ENCODE measurements at regions of chr2 and their contacts with region 1.

Region 1: GRCh38 chr2:37877457-37878315 is 47.4 kb upstream of the RMDN2 start:
- DNase-seq: peak; percentile 78
- H3K4me3 Mint-ChIP-seq: no peak overlapping the region
- H3K27ac Mint-ChIP-seq: no peak overlapping the region
- H3K4me1 Mint-ChIP-seq: peaks cover 4% of the 10 kb centered on the region
- H3K27me3 Mint-ChIP-seq: peaks cover 12% of the 10 kb centered on the region
- CTCF ChIP-seq: peak; percentile 79

Region 2: GRCh38 chr2:37168217-37168981 is 709.3 kb before region 1 on chr2:
- CTCF ChIA-PET with region 1: interaction called, 5 read pairs
- POLR2A ChIA-PET with region 1: no interaction called
- intact Hi-C with region 1: loop called (anchors 2 kb)
- DNase-seq: peak; percentile 59
- H3K4me3 Mint-ChIP-seq: no peak overlapping the region
- H3K27ac Mint-ChIP-seq: no peak overlapping the region
- H3K4me1 Mint-ChIP-seq: no peaks in the 10 kb centered on the region
- H3K27me3 Mint-ChIP-seq: no peaks in the 10 kb centered on the region
- CTCF ChIP-seq: peak; percentile 65

Region 3: DNA sequence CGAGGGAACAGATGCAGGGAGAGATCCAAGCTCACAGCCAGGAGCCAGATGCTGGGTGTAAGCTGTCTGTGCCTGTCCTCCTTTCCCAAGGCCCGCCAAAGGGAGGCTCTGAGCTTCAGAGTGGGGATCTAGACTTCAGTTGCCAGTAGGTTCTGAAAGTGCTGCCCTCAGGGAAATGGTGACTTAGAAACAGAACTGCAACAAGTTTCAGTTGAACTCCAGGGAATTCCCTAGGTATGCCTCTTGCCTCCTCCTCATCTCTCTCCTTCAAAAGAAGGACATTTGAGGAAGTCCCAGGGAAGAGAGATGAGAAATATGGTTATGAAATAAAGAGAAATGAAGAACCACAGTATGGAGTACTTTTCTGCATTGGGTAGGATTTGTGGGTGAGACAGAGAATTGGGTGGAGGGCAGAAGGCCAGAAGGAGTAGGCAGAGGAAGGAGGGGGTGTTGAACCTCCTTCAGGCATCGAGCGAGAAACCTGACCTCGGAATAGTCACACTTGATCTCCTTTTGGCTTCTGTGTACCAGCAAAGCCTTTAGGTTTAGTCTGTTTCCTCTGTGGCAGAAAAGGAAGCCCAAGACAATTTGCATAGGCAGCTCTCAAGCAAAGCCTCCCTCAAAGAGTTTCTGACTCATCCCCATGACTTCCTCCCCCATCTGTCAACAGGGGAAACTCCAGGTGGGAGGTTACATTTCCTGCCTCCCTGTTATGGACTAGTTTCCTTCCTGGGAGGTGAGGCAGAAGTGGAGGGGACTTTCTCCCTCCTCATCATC is 487.5 kb before region 1 on chr2:
- CTCF ChIA-PET with region 1: interaction called, 137 read pairs
- POLR2A ChIA-PET with region 1: interaction called, 12 read pairs
- intact Hi-C with region 1: no loop called
- DNase-seq: peak; percentile 92
- H3K4me3 Mint-ChIP-seq: no peak overlapping the region
- H3K27ac Mint-ChIP-seq: peak overlapping the region; percentile 64
- H3K4me1 Mint-ChIP-seq: peaks cover 19% of the 10 kb centered on the region
- H3K27me3 Mint-ChIP-seq: no peaks in the 10 kb centered on the region
- CTCF ChIP-seq: no peak

Region 4: GRCh38 chr2:37809525-37809924 is 68.2 kb before region 1 on chr2:
- CTCF ChIA-PET with region 1: interaction called, 13 read pairs
- POLR2A ChIA-PET with region 1: no interaction called
- intact Hi-C with region 1: no loop called
- DNase-seq: peak; percentile 65
- H3K4me3 Mint-ChIP-seq: no peak overlapping the region
- H3K27ac Mint-ChIP-seq: no peak overlapping the region
- H3K4me1 Mint-ChIP-seq: no peaks in the 10 kb centered on the region
- H3K27me3 Mint-ChIP-seq: no peaks in the 10 kb centered on the region
- CTCF ChIP-seq: peak; percentile 49

Region 5: DNA sequence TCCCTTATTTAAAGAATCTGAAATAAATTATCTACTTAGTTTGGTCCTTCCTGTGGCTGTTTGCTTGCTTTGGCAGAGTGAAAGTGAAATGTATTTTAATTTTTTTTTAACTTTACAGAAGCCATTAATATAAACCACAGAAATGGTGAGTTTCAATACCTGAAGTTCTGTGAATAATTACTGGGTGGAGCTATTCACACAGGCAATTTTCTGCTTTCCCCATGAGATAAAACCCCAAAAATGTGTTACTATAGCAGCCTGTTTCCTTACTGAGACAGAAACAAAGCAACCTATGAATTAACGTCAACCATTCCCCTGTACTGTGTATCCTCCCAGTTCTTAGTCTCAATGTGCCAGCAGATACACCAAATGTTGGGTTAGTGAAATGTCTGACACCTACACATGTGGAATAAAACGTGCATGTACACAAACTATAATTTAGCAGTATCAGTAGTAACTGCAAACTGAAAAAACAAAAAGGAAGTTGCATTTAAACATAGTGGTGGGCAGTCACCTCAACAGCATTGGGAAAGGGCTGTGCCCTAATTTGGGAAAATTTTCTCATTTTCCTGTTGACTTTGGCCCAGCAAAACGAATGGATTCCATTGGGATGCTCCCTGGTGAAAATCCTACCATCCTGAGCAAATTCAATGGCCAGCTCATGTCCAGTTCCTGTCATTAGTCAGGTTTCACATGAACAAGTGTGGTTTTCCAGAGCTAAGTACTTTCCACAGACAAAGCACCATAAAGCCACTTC is 25.7 kb before region 1 on chr2:
- CTCF ChIA-PET with region 1: interaction called, 11 read pairs
- POLR2A ChIA-PET with region 1: interaction called, 6 read pairs
- intact Hi-C with region 1: no loop called
- DNase-seq: no peak
- H3K4me3 Mint-ChIP-seq: no peak overlapping the region
- H3K27ac Mint-ChIP-seq: no peak overlapping the region
- H3K4me1 Mint-ChIP-seq: no peaks in the 10 kb centered on the region
- H3K27me3 Mint-ChIP-seq: no peaks in the 10 kb centered on the region
- CTCF ChIP-seq: no peak

Region 6: GRCh38 chr2:37890893-37891495 is 13.3 kb after region 1 on chr2:
- CTCF ChIA-PET with region 1: interaction called, 30 read pairs
- POLR2A ChIA-PET with region 1: no interaction called
- intact Hi-C with region 1: no loop called
- DNase-seq: peak; percentile 73
- H3K4me3 Mint-ChIP-seq: no peak overlapping the region
- H3K27ac Mint-ChIP-seq: no peak overlapping the region
- H3K4me1 Mint-ChIP-seq: peaks cover 14% of the 10 kb centered on the region
- H3K27me3 Mint-ChIP-seq: peaks cover 6% of the 10 kb centered on the region
- CTCF ChIP-seq: peak; percentile 66

Region 7: GRCh38 chr2:38000485-38001222 is 123.0 kb after region 1 on chr2:
- CTCF ChIA-PET with region 1: no interaction called
- POLR2A ChIA-PET with region 1: no interaction called
- intact Hi-C with region 1: no loop called
- DNase-seq: no peak
- H3K4me3 Mint-ChIP-seq: no peak overlapping the region
- H3K27ac Mint-ChIP-seq: no peak overlapping the region
- H3K4me1 Mint-ChIP-seq: no peaks in the 10 kb centered on the region
- H3K27me3 Mint-ChIP-seq: no peaks in the 10 kb centered on the region
- CTCF ChIP-seq: no peak

Measured in MCF 10A (cell line).